Activated B cell treated with CpG ODN at 0.5 μM for 24 hours (primary cell): ENCODE measurements at regions of chr18 and their contacts with region 1.

Region 1: GRCh38 chr18:75209129-75209950 is at the start of gene PTGR3:
- DNase-seq: peak; percentile 68
- ATAC-seq: peak; percentile 66
- H3K4me3 Mint-ChIP-seq: peak within 1 kb of the TSS; percentile 91
- H3K27ac Mint-ChIP-seq: peak within 1 kb of the TSS; percentile 90
- H3K4me1 Mint-ChIP-seq: peaks cover 59% of the 10 kb centered on the region
- H3K27me3 Mint-ChIP-seq: peaks cover 6% of the 10 kb centered on the region
- CTCF ChIP-seq: no peak
- total RNA-seq, gene PTGR3: 19.0 and 19.3 TPM in 2 replicates

Region 2: DNA sequence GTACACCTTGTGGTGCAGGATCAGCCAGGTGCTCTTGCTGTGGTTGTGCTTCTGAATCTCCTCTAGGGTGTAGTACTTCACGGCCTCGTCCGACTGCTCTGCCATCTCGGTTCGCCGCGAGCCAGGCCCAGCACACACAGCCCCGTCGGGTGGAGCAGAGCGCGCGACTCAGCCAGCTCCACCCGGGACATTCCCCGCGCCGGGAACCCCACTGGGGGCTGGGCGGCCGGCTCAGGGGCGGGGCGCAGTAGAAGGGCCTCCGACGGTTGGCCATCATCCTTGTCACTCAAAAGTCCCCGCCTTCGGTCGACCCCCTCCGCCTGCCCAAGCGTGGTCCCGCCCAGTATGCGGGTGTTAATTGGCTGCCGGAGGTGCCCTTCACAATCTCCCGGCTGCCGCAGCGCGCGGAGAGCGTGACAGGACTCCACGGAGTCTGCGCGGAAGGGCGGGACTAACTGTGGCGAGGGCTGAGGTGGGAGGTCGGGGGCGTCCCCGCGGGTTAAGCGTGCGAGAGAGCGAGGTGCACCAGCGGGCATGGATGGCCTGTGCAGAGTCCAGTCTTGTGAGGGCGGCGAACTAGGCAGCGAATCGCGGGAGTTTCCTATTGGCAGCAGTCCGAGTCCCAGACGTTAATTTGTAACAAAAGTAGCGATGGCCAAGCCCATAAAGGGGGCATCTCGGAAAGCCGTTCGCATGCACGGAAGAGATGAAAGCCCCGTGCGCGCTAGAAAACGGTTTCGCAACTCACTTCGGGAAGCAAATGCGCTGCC is 917.4 kb before region 1 on chr18 and contains the start of gene CYB5A:
- CTCF ChIA-PET with region 1: no interaction called
- POLR2A ChIA-PET with region 1: no interaction called
- intact Hi-C with region 1: loop called (anchors 1 kb)
- DNase-seq: peak; percentile 99
- ATAC-seq: peak; percentile 97
- H3K4me3 Mint-ChIP-seq: peak within 1 kb of the TSS; percentile 97
- H3K27ac Mint-ChIP-seq: peak within 1 kb of the TSS; percentile 91
- H3K4me1 Mint-ChIP-seq: peaks cover 49% of the 10 kb centered on the region
- H3K27me3 Mint-ChIP-seq: no peaks in the 10 kb centered on the region
- CTCF ChIP-seq: no peak
- total RNA-seq, gene CYB5A: 46.2 and 47.2 TPM in 2 replicates

Region 3: DNA sequence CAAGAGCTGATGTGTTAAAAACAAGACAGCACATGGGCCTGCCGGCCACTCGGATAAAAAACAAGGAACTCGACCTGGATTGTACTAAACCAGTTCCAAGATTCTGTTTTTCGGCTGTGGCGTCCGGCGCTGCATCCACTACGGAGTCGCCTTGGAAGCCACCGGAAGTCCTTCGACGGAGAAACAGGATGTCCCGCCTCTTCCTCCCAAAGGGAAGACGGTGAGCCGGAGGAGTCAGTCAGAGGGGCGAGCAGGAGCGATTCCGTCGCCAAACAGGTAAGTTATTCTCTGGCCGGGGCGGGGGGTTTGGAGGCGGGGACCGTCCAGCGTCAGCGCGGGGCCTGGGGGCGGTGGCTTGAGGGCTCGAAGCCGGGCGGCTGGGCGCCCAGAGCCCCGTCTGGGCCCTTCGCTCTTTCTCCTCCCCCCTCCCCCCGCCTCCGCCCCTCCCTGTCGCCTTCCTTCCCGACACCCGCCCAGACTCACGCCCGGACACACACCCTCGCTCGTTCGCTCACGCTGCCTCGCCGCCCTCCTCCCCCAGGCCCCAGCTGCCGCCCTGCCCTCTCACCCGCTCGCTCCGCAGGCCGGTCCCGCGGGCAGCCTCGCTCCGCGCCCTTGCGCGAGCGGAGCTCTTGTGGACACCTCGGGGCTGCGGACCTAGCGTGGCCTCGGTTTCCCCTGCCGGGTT is 611.5 kb before region 1 on chr18 and contains the start of gene ZNF407:
- CTCF ChIA-PET with region 1: no interaction called
- POLR2A ChIA-PET with region 1: interaction called, 14 read pairs
- intact Hi-C with region 1: loop called (anchors 1 kb)
- DNase-seq: peak; percentile 85
- ATAC-seq: peak; percentile 84
- H3K4me3 Mint-ChIP-seq: peak within 1 kb of the TSS; percentile 96
- H3K27ac Mint-ChIP-seq: peak within 1 kb of the TSS; percentile 98
- H3K4me1 Mint-ChIP-seq: peaks cover 49% of the 10 kb centered on the region
- H3K27me3 Mint-ChIP-seq: no peaks in the 10 kb centered on the region
- CTCF ChIP-seq: no peak
- total RNA-seq, gene ZNF407: 24.0 and 26.7 TPM in 2 replicates

Region 4: GRCh38 chr18:74806700-74807416 is 402.5 kb before region 1 on chr18:
- CTCF ChIA-PET with region 1: no interaction called
- POLR2A ChIA-PET with region 1: no interaction called
- intact Hi-C with region 1: loop called (anchors 5 kb)
- DNase-seq: no peak
- ATAC-seq: peak; percentile 95
- H3K4me3 Mint-ChIP-seq: peak overlapping the region; percentile 46
- H3K27ac Mint-ChIP-seq: peak overlapping the region; percentile 25
- H3K4me1 Mint-ChIP-seq: peaks cover 17% of the 10 kb centered on the region
- H3K27me3 Mint-ChIP-seq: no peaks in the 10 kb centered on the region
- CTCF ChIP-seq: no peak

Region 5: GRCh38 chr18:75088622-75089211 is 120.6 kb before region 1 on chr18:
- CTCF ChIA-PET with region 1: no interaction called
- POLR2A ChIA-PET with region 1: interaction called, 10 read pairs
- intact Hi-C with region 1: no loop called
- DNase-seq: no peak
- ATAC-seq: no peak
- H3K4me3 Mint-ChIP-seq: no peak overlapping the region
- H3K27ac Mint-ChIP-seq: no peak overlapping the region
- H3K4me1 Mint-ChIP-seq: no peaks in the 10 kb centered on the region
- H3K27me3 Mint-ChIP-seq: peaks cover 3% of the 10 kb centered on the region
- CTCF ChIP-seq: no peak

Region 6: GRCh38 chr18:75247611-75248421 is 38.5 kb after region 1 on chr18:
- CTCF ChIA-PET with region 1: no interaction called
- POLR2A ChIA-PET with region 1: interaction called, 4 read pairs
- intact Hi-C with region 1: loop called (anchors 1 kb)
- DNase-seq: no peak
- ATAC-seq: no peak
- H3K4me3 Mint-ChIP-seq: peak overlapping the region; percentile 84
- H3K27ac Mint-ChIP-seq: peak overlapping the region; percentile 82
- H3K4me1 Mint-ChIP-seq: peaks cover 26% of the 10 kb centered on the region
- H3K27me3 Mint-ChIP-seq: no peaks in the 10 kb centered on the region
- CTCF ChIP-seq: no peak

Region 7: DNA sequence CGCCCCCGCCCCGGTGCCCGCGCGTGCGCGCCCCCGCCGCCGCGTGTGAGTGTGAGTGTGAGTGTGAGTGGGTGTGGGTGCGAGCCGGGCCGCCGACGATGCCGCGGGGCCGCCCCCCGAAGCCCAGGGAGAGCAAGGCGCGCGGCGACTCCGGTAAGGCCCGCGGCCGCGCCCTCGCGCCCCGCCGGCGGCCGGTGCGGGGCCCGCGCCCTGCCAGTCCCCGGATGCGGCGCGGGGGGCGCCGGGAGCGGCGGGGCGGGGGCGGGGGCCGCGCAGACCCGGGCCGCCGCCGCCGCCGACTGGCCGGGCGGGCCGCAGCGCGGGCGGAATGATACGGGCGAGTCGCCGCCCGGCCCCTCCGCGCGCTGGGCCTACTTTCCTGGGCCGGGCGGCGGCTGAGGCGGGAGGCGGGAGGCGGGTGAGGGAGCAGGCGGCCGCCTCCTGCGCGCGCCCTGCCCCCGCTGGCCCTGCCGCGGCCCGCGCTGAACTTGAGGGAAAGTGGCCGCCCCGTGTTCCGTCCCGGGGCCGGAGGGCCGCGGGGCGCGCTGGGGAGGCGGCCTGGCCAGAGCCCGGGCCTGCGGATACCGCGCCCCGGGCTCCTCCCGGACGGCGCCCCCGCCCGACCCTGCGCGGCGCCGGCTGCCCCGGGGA is 1613.3 kb after region 1 on chr18 and contains the start of gene ZNF236:
- CTCF ChIA-PET with region 1: no interaction called
- POLR2A ChIA-PET with region 1: no interaction called
- intact Hi-C with region 1: loop called (anchors 5 kb)
- DNase-seq: peak; percentile 79
- ATAC-seq: peak; percentile 58
- H3K4me3 Mint-ChIP-seq: peak within 1 kb of the TSS; percentile 95
- H3K27ac Mint-ChIP-seq: peak within 1 kb of the TSS; percentile 97
- H3K4me1 Mint-ChIP-seq: peaks cover 64% of the 10 kb centered on the region
- H3K27me3 Mint-ChIP-seq: no peaks in the 10 kb centered on the region
- CTCF ChIP-seq: no peak
- total RNA-seq, gene ZNF236: 27.4 and 28.2 TPM in 2 replicates